ENCODE measurements at regions of chr18 and their contacts with region 1.

Region 1: DNA sequence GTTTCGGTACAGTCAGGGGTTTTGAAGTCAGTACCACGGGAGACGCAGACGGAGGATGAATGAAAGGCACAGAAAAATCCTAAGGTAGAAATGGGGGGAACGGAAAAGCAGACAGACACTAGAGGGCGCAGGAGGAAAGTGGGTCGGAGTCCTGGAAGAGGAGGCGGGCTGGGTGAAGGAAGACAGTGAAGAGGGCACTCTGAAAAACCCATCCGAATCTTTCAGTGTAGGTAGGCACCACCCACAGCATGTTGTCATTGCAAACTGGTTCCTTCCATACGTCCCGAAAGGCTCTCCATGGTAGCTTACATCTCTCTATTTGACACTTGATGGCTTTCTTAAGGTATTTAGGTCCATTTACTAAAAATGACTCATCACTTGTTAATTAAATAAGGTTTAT is 18.5 kb upstream of the ZNF236 start:
- DNase-seq: peak; percentile 76
- H3K4me3 Mint-ChIP-seq: peak overlapping the region; percentile 29
- H3K27ac Mint-ChIP-seq: no peak overlapping the region
- H3K4me1 Mint-ChIP-seq: peaks cover 12% of the 10 kb centered on the region
- H3K27me3 Mint-ChIP-seq: peaks cover 7% of the 10 kb centered on the region

Region 2: DNA sequence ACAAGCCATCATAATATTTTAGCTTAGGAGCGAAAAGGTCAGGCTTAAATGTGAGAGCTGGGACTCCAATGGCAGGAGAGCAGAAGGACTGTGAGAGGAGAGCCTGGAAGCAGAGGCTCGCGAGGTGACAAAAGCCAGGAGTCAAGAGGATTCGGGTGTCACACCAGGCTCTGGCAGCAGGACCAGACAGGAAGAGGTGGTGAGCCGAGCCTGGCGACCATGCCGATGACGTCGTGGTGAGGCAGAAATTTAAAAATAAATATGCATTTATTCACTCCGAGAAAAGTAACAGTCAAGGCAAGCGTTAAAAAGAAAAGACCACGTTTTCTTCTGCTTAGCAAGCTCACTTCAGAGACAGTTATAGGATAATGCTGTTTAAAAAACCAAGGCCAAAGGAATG is 12.7 kb before region 1 on chr18:
- CTCF ChIA-PET with region 1: interaction called, 38 read pairs
- POLR2A ChIA-PET with region 1: no interaction called
- DNase-seq: no peak
- H3K4me3 Mint-ChIP-seq: no peak overlapping the region
- H3K27ac Mint-ChIP-seq: no peak overlapping the region
- H3K4me1 Mint-ChIP-seq: peaks cover 16% of the 10 kb centered on the region
- H3K27me3 Mint-ChIP-seq: peaks cover 14% of the 10 kb centered on the region

Region 3: DNA sequence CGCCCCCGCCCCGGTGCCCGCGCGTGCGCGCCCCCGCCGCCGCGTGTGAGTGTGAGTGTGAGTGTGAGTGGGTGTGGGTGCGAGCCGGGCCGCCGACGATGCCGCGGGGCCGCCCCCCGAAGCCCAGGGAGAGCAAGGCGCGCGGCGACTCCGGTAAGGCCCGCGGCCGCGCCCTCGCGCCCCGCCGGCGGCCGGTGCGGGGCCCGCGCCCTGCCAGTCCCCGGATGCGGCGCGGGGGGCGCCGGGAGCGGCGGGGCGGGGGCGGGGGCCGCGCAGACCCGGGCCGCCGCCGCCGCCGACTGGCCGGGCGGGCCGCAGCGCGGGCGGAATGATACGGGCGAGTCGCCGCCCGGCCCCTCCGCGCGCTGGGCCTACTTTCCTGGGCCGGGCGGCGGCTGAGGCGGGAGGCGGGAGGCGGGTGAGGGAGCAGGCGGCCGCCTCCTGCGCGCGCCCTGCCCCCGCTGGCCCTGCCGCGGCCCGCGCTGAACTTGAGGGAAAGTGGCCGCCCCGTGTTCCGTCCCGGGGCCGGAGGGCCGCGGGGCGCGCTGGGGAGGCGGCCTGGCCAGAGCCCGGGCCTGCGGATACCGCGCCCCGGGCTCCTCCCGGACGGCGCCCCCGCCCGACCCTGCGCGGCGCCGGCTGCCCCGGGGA is 18.8 kb after region 1 on chr18 and contains the start of gene ZNF236:
- CTCF ChIA-PET with region 1: interaction called, 23 read pairs
- POLR2A ChIA-PET with region 1: no interaction called
- DNase-seq: peak; percentile 61
- H3K4me3 Mint-ChIP-seq: peak within 1 kb of the TSS; percentile 94
- H3K27ac Mint-ChIP-seq: peak within 1 kb of the TSS; percentile 96
- H3K4me1 Mint-ChIP-seq: peaks cover 62% of the 10 kb centered on the region
- H3K27me3 Mint-ChIP-seq: no peaks in the 10 kb centered on the region
- total RNA-seq, gene ZNF236: 23.9 to 27.7 TPM

Measured in activated CD4-positive, alpha-beta T cell treated with anti-CD3 and anti-CD28 coated beads, Interleukin-2, amount 10 ng/mL, durations not matched to agents 7 days and 5 days (primary cell).